ENCODE measurements at regions of chr11 and their contacts with region 1.

Region 1: DNA sequence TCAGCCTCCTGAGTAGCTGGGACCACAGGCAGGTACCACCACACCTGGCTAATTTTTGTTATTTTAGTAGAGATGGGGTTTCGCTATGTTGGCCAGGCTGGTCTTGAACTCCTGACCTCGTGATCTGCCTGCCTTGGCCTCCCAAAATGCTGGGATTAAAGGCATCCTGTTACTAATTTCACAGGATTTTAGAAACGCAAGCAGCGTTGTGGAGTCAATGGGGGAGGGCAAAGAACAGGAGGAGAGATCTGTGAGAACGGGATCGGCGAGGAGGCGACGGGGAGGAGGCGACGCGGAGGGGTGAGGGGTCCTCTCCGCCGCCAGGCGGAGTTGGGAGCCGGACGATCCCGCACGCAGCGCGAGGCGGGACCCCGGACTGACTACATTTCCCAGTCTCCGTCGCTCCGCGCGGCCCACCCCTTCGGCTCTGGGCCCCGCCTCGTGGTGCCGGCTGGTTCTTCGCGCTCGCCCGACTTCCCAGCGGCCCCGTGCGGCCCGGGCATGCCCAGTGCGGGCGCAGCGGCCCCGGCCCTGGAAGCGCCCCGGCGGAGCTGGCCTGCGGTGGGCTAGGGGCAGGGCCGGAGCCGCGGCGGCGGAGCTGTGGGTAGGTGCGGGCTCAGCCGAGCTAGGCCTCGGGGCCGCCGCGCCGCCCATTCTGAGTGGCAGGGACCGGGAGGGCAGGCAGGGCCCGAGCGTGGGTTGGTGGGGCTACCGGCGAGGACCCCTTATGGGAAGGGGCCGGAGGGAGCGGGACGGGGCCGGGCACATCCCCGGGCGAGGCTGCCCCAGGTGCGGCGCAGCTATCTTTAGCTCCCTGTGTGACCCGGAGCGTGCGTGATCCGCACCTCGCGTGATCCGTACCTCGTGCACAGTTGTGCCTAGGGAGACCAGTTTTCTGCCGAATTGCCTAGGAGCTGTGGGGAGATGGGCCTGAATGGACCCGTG is at the start of gene EI24:
- DNase-seq: peak; percentile 83
- ATAC-seq: peak; percentile 97
- H3K4me3 Mint-ChIP-seq: peak within 1 kb of the TSS; percentile 93
- H3K27ac Mint-ChIP-seq: peak within 1 kb of the TSS; percentile 88
- H3K4me1 Mint-ChIP-seq: peaks cover 22% of the 10 kb centered on the region
- H3K27me3 Mint-ChIP-seq: no peaks in the 10 kb centered on the region
- CTCF ChIP-seq: no peak
- total RNA-seq, gene EI24: 34.3 and 34.5 TPM in 2 replicates

Region 2: GRCh38 chr11:125423247-125423849 is 145.9 kb before region 1 on chr11:
- CTCF ChIA-PET with region 1: interaction called, 3 read pairs
- POLR2A ChIA-PET with region 1: no interaction called
- intact Hi-C with region 1: loop called (anchors 1 kb)
- DNase-seq: no peak
- ATAC-seq: peak; percentile 40
- H3K4me3 Mint-ChIP-seq: no peak overlapping the region
- H3K27ac Mint-ChIP-seq: no peak overlapping the region
- H3K4me1 Mint-ChIP-seq: no peaks in the 10 kb centered on the region
- H3K27me3 Mint-ChIP-seq: peaks cover 9% of the 10 kb centered on the region
- CTCF ChIP-seq: no peak

Region 3: DNA sequence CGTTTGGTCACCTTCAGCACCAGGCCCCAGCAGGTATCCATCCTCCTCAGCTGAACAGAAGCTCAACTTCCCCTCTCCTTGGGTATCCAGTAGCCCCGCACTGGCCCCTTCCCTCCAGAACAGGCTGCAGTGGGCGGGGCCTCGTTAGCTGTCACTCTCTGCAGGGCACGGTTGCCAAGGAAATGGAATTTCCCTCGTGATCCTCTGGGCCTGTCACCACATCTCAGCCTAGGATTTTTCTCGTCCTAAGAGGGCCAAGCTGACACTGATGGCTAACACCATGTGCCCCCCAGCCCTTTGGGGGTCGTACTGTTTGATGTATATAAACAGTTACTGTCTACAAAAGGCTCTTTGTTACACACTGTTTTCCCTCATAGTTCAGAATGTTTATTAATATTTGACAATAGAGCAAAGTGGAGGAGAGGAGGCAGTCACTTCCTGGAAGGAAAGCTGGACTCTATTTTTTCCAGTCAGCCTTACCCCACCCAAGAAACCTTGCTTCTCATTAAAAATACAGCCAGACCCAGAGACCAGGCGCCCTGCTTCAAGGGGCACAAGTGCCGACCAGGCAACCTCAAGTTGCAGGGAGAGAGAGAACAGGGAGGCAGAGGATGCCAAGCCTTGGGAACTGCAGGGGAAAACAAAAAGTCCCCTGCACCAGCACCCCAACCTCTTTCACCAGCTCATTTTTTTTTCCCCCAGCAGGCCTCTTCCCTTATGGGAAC is 117.7 kb before region 1 on chr11:
- CTCF ChIA-PET with region 1: interaction called, 3 read pairs
- POLR2A ChIA-PET with region 1: interaction called, 3 read pairs
- intact Hi-C with region 1: loop called (anchors 2 kb)
- DNase-seq: no peak
- ATAC-seq: no peak
- H3K4me3 Mint-ChIP-seq: no peak overlapping the region
- H3K27ac Mint-ChIP-seq: no peak overlapping the region
- H3K4me1 Mint-ChIP-seq: peaks cover 4% of the 10 kb centered on the region
- H3K27me3 Mint-ChIP-seq: no peaks in the 10 kb centered on the region
- CTCF ChIP-seq: no peak

Region 4: GRCh38 chr11:125494974-125495725 is 74.1 kb before region 1 on chr11:
- CTCF ChIA-PET with region 1: interaction called, 4 read pairs
- POLR2A ChIA-PET with region 1: interaction called, 3 read pairs
- intact Hi-C with region 1: loop called (anchors 1 kb)
- DNase-seq: peak; percentile 35
- ATAC-seq: peak; percentile 40
- H3K4me3 Mint-ChIP-seq: peak overlapping the region; percentile 85
- H3K27ac Mint-ChIP-seq: peak overlapping the region; percentile 50
- H3K4me1 Mint-ChIP-seq: peaks cover 24% of the 10 kb centered on the region
- H3K27me3 Mint-ChIP-seq: peaks cover 38% of the 10 kb centered on the region
- CTCF ChIP-seq: no peak

Region 5: GRCh38 chr11:125532668-125533067 is 36.6 kb before region 1 on chr11:
- CTCF ChIA-PET with region 1: no interaction called
- POLR2A ChIA-PET with region 1: no interaction called
- intact Hi-C with region 1: no loop called
- DNase-seq: no peak
- ATAC-seq: no peak
- H3K4me3 Mint-ChIP-seq: no peak overlapping the region
- H3K27ac Mint-ChIP-seq: no peak overlapping the region
- H3K4me1 Mint-ChIP-seq: no peaks in the 10 kb centered on the region
- H3K27me3 Mint-ChIP-seq: peaks cover 16% of the 10 kb centered on the region
- CTCF ChIP-seq: no peak

Region 6: GRCh38 chr11:125583496-125583895 is 14.3 kb after region 1 on chr11:
- CTCF ChIA-PET with region 1: no interaction called
- POLR2A ChIA-PET with region 1: interaction called, 10 read pairs
- intact Hi-C with region 1: no loop called
- DNase-seq: no peak
- ATAC-seq: no peak
- H3K4me3 Mint-ChIP-seq: no peak overlapping the region
- H3K27ac Mint-ChIP-seq: no peak overlapping the region
- H3K4me1 Mint-ChIP-seq: peaks cover 5% of the 10 kb centered on the region
- H3K27me3 Mint-ChIP-seq: no peaks in the 10 kb centered on the region
- CTCF ChIP-seq: no peak

Region 7: DNA sequence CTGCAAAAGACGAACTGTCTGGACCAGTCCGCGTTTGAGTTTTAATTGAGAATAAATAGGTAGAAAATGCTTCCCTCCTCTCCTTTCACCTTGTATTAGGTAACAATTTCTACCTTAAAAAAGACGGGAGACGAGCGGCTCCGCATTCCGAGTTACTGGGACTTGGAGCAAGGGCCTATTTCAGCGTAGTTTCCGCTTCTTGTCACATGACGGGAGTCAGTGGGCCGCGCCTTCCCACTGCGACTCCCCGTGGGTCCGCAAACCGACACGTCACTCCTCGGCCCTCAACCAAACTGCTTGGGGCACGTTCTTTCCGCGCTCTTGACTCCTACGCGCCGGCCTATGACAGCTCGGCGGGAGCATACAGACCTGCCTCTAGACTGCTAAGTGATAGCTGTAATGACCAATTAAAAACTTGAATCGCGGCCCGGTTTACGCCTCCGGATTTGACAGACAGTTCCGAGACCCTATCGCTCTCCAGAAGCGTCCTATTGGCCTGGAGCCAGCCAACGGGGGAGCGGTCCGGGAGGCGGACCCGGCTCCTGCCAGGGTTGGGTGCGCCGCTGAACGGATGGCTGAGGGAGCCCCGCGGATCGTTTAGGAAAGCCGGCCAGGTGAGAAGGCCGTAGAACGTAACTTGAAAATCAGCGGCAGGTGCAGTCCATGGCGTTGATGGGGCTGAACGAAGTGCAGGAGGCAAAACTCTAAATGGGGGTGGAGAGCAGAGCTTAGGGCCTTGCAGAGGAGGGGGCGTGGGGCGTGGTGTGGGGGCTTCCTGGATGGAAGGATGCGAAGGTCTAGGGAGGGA is 23.3 kb after region 1 on chr11 and contains the start of gene STT3A:
- CTCF ChIA-PET with region 1: interaction called, 10 read pairs
- POLR2A ChIA-PET with region 1: interaction called, 82 read pairs
- intact Hi-C with region 1: loop called (anchors 1 kb)
- DNase-seq: peak; percentile 90
- ATAC-seq: peak; percentile 92
- H3K4me3 Mint-ChIP-seq: peak within 1 kb of the TSS; percentile 95
- H3K27ac Mint-ChIP-seq: peak within 1 kb of the TSS; percentile 99
- H3K4me1 Mint-ChIP-seq: peaks cover 58% of the 10 kb centered on the region
- H3K27me3 Mint-ChIP-seq: no peaks in the 10 kb centered on the region
- CTCF ChIP-seq: no peak
- total RNA-seq, gene STT3A: 79.4 and 86.5 TPM in 2 replicates

Measured in activated B cell treated with CpG ODN at 0.5 μM for 24 hours (primary cell).